Naive thymus-derived CD4-positive, alpha-beta T cell (primary cell): ENCODE measurements at regions of chr6 and their contacts with region 1.

Region 1: DNA sequence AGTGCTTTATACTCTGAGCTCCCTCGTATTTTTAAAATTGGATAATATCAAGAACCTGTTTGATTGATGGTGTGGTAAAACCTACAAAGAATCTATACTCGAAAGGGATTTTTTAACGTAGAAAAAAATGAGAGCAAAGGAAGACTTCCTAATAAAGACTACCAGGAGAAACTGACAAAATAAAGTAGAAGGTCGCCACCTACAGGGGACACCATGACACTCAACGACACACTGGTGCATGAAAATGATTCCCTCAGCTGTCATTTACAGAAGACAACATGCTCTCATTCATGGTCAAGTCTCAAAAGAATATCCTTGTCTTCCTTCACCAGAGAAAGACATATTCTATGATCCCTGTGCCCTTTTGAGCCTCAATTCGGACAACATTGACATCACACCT is 10.1 kb upstream of the NHSL1 start:
- DNase-seq: peak in 8 of 9 donors; percentile 5 to 52 (median 31)
- ATAC-seq: peak; percentile 52
- H3K4me3 ChIP-seq: no peak overlapping the region
- H3K4me3 Mint-ChIP-seq: no peak overlapping the region
- H3K27ac ChIP-seq: no peak overlapping the region
- H3K27ac Mint-ChIP-seq: peak overlapping the region in 1 of 9 donors; percentile 6
- H3K4me1 ChIP-seq: peaks cover 0 to under 1% of the 10 kb centered on the region in 2 donors
- H3K4me1 Mint-ChIP-seq: peaks cover 0 to 5% (median 0%) of the 10 kb centered on the region in 7 donors
- H3K27me3 ChIP-seq: no peaks in the 10 kb centered on the region
- H3K27me3 Mint-ChIP-seq: peaks cover 0 to 23% (median 4%) of the 10 kb centered on the region in 5 donors

Region 2: DNA sequence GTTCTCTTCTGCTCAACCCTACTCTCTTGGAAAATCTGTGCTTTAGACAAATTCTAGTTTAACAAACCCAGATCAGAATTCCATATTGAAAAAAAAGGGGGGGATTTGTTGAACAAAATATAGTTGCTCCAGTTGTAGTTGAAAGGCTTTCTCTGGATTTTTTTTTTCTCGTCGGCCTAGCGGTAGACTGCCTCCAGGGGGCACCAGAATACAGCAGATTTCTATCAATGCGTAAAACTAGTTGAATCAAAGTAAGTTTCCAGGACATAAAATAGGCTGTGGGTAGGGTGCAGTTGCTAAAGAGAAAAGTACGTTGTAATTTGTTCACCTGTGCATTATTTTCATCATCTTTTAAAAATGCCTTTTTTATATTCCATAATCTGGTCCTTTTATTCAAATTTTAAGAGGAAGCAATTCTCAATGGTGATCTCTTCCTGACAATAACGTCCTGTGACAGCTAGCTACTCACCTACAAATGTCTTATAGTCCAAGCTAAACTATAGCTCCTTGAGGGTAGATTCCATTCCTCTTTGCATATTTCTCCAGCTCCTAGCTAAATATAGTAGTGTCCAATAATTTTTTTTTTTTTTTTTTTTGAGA is 507.5 kb before region 1 on chr6:
- CTCF ChIA-PET with region 1: no interaction called
- POLR2A ChIA-PET with region 1: no interaction called
- intact Hi-C with region 1: loop called in 1 of 2 experiments (anchors 5 kb)
- DNase-seq: peak in 8 of 9 donors; percentile 37 to 65 (median 56)
- ATAC-seq: peak; percentile 79
- H3K4me3 ChIP-seq: no peak overlapping the region
- H3K4me3 Mint-ChIP-seq: no peak overlapping the region
- H3K27ac ChIP-seq: no peak overlapping the region
- H3K27ac Mint-ChIP-seq: peak overlapping the region in 1 of 9 donors; percentile 27
- H3K4me1 ChIP-seq: no peaks in the 10 kb centered on the region
- H3K4me1 Mint-ChIP-seq: peaks cover 0 to 16% (median 5%) of the 10 kb centered on the region in 7 donors
- H3K27me3 ChIP-seq: no peaks in the 10 kb centered on the region
- H3K27me3 Mint-ChIP-seq: peaks cover 0 to 11% (median 0%) of the 10 kb centered on the region in 5 donors

Region 3: DNA sequence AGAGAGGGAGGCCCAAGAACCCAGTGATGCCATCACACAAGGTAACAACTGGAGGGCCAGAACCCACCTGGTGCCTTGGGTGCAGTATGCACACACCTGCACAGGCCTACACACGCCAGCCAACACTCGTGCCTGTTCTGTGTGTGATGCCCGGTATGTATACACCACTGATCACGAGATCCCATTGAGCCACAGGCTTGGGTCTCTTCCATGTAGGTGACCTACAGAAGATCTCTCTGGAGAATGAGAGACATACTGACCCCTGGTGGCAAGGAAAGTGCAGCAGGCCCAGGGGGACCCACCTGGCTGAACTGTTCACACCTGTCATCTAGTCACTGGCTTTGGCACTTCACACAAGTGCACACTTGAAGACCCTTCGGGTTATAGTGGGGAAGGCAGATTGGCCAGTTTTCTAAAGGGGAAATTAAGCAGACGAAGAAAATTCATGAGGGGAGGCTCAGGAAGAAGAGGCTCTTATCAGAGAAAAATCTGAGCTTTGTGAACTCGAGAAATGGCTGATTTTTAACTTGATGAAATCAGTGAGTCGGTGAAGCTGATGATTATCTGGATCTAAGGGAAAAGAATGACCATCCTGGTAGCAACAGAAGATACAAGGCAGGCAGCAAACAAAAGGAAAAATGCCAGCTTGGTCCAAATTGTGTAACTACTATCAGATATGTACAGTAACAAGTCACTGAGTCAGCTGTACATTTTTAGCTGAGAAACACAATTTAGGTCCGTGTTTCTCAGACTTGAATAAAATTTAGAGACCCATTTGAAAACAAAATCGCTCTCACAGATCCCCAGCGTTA is 222.0 kb before region 1 on chr6:
- CTCF ChIA-PET with region 1: interaction called, 5 read pairs
- POLR2A ChIA-PET with region 1: no interaction called
- intact Hi-C with region 1: loop called (anchors 2 to 10 kb)
- DNase-seq: peak in 8 of 9 donors; percentile 15 to 43 (median 26)
- ATAC-seq: peak; percentile 44
- H3K4me3 ChIP-seq: no peak overlapping the region
- H3K4me3 Mint-ChIP-seq: no peak overlapping the region
- H3K27ac ChIP-seq: no peak overlapping the region
- H3K27ac Mint-ChIP-seq: no peak overlapping the region
- H3K4me1 ChIP-seq: no peaks in the 10 kb centered on the region
- H3K4me1 Mint-ChIP-seq: no peaks in the 10 kb centered on the region
- H3K27me3 ChIP-seq: no peaks in the 10 kb centered on the region
- H3K27me3 Mint-ChIP-seq: peaks cover 0 to 4% (median 0%) of the 10 kb centered on the region in 5 donors

Region 4: GRCh38 chr6:138372711-138373463 is 136.5 kb before region 1 on chr6:
- CTCF ChIA-PET with region 1: no interaction called
- POLR2A ChIA-PET with region 1: no interaction called
- intact Hi-C with region 1: loop called in 1 of 2 experiments (anchors 2 kb)
- DNase-seq: peak in 5 of 9 donors; percentile 7 to 26 (median 18)
- ATAC-seq: peak; percentile 55
- H3K4me3 ChIP-seq: no peak overlapping the region
- H3K4me3 Mint-ChIP-seq: no peak overlapping the region
- H3K27ac ChIP-seq: no peak overlapping the region
- H3K27ac Mint-ChIP-seq: no peak overlapping the region
- H3K4me1 ChIP-seq: no peaks in the 10 kb centered on the region
- H3K4me1 Mint-ChIP-seq: no peaks in the 10 kb centered on the region
- H3K27me3 ChIP-seq: no peaks in the 10 kb centered on the region
- H3K27me3 Mint-ChIP-seq: peaks cover 0 to 29% (median 5%) of the 10 kb centered on the region in 5 donors

Region 5: GRCh38 chr6:138455746-138456400 is 53.5 kb before region 1 on chr6:
- CTCF ChIA-PET with region 1: interaction called, 18 read pairs
- POLR2A ChIA-PET with region 1: interaction called, 16 read pairs
- intact Hi-C with region 1: loop called in 1 of 2 experiments (anchors 1 kb)
- DNase-seq: peak in 7 of 9 donors; percentile 51 to 81 (median 75)
- ATAC-seq: peak; percentile 86
- H3K4me3 ChIP-seq: peak overlapping the region; percentile 48
- H3K4me3 Mint-ChIP-seq: peak overlapping the region; percentile 40 to 79 (median 70)
- H3K27ac ChIP-seq: peak overlapping the region; percentile 75
- H3K27ac Mint-ChIP-seq: peak overlapping the region; percentile 77 to 97 (median 93)
- H3K4me1 ChIP-seq: peaks cover 19 to 22% of the 10 kb centered on the region in 2 donors
- H3K4me1 Mint-ChIP-seq: peaks cover 5 to 32% (median 22%) of the 10 kb centered on the region in 7 donors
- H3K27me3 ChIP-seq: no peaks in the 10 kb centered on the region
- H3K27me3 Mint-ChIP-seq: peaks cover 0 to 3% (median 0%) of the 10 kb centered on the region in 5 donors

Region 6: DNA sequence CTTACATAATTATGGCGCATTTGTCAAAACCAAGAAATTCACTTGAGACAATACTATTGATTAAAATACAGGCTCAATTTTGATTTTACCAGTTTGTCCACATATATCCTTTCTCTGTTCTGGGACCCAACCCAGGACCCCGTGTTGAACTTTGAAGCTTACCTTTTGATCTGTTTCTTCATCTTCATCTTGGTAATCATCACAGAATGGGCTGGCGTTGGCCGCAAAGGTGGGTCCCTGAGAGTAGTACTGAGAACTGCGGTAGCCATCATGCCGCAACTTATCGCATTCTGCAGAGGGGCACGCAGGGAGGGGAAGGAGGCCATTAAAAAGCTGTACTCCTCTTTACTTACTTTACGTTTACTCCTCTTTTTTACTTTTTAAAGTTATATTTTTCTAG is 36.2 kb before region 1 on chr6:
- CTCF ChIA-PET with region 1: no interaction called
- POLR2A ChIA-PET with region 1: no interaction called
- intact Hi-C with region 1: no loop called
- DNase-seq: no peak
- ATAC-seq: no peak
- H3K4me3 ChIP-seq: no peak overlapping the region
- H3K4me3 Mint-ChIP-seq: no peak overlapping the region
- H3K27ac ChIP-seq: no peak overlapping the region
- H3K27ac Mint-ChIP-seq: no peak overlapping the region
- H3K4me1 ChIP-seq: no peaks in the 10 kb centered on the region
- H3K4me1 Mint-ChIP-seq: no peaks in the 10 kb centered on the region
- H3K27me3 ChIP-seq: no peaks in the 10 kb centered on the region
- H3K27me3 Mint-ChIP-seq: peaks cover 0 to 7% (median 0%) of the 10 kb centered on the region in 5 donors

Region 7: GRCh38 chr6:138765896-138766655 is 256.7 kb after region 1 on chr6:
- CTCF ChIA-PET with region 1: no interaction called
- POLR2A ChIA-PET with region 1: no interaction called
- intact Hi-C with region 1: loop called (anchors 1 to 10 kb)
- DNase-seq: peak in 5 of 9 donors; percentile 25 to 42 (median 29)
- ATAC-seq: no peak
- H3K4me3 ChIP-seq: no peak overlapping the region
- H3K4me3 Mint-ChIP-seq: no peak overlapping the region
- H3K27ac ChIP-seq: no peak overlapping the region
- H3K27ac Mint-ChIP-seq: peak overlapping the region in 1 of 9 donors; percentile 26
- H3K4me1 ChIP-seq: no peaks in the 10 kb centered on the region
- H3K4me1 Mint-ChIP-seq: peaks cover 0 to 5% (median 0%) of the 10 kb centered on the region in 7 donors
- H3K27me3 ChIP-seq: no peaks in the 10 kb centered on the region
- H3K27me3 Mint-ChIP-seq: no peaks in the 10 kb centered on the region